ENCODE measurements at regions of chr4 and their contacts with region 1.

Region 1: DNA sequence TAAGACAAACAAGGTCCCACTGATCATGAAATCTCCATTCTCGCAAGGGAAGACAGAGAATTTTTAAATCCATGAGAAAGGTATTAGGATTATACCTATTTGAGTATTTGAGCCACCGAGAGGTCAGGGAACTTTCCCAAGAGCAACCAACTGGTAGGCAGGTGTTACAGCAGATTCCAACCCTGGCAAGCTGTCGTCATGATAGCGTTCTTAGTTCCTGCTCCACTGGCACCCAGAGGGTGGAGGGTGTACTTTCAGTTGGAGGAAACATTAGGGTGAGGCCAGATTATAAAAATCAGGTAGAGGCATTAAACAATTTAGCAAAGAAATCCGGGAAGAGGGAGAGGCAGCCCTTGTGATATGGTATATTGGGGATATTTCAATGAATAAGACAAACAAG is 23.3 kb downstream of the COQ2 start:
- DNase-seq: no peak
- H3K4me3 ChIP-seq: no peak overlapping the region
- H3K27ac ChIP-seq: no peak overlapping the region
- H3K4me1 ChIP-seq: peaks cover 25% of the 10 kb centered on the region
- CTCF ChIP-seq: no peak

Region 2: DNA sequence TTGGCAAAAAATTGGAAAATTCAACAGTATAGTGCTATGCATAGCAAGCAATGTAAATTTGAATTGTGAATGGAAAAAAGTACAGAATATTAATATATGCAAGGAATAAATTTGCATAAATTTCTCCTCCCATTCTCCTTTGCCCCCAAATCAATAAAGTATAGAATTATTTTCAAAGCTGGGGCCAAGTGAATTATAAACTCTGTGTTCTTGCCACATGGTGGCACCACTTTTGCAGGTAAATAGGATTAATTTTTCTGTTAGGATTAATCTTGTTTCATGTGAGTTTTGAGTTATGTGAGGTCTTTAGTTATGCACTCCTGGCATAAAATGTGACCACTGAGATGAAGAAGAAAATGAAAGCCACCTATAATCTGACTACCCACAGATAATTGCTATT is 206.4 kb before region 1 on chr4:
- CTCF ChIA-PET with region 1: no interaction called
- POLR2A ChIA-PET with region 1: interaction called, 3 read pairs
- intact Hi-C with region 1: loop called (anchors 5 kb)
- DNase-seq: peak; percentile 63
- H3K4me3 ChIP-seq: no peak overlapping the region
- H3K27ac ChIP-seq: no peak overlapping the region
- H3K4me1 ChIP-seq: no peaks in the 10 kb centered on the region
- CTCF ChIP-seq: peak; percentile 82

Measured in OCI-LY7 (cell line).